ENCODE measurements at regions of chr17 and their contacts with region 1.

Region 1: GRCh38 chr17:47279062-47279736 is 25.6 kb downstream of the ITGB3 start:
- DNase-seq: peak; percentile 76
- H3K4me3 ChIP-seq: no peak overlapping the region
- H3K27ac ChIP-seq: peak overlapping the region; percentile 68
- H3K4me1 ChIP-seq: peaks cover 21% of the 10 kb centered on the region
- H3K27me3 ChIP-seq: no peaks in the 10 kb centered on the region
- CTCF ChIP-seq: no peak
- POLR2A ChIP-seq: no peak

Region 2: DNA sequence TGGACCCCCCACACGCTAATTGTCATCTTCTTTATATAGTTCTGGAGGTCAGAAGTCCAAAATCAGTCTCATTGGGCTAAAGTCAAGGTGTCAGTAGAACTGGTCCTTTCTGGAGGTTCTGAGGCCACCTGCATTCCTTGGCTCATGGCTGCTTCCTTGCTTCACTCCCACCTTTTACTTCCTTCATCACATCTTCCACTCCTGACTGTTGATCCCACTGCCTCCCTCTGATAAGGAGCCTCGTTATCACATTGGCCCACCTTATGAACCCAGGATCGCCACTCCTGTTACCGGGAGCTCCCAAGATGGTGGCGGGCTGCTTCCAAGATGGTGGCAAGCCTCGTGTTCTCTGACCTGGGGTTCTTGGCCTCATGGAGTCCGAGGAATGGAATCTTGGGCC is 173.1 kb before region 1 on chr17:
- CTCF ChIA-PET with region 1: no interaction called
- POLR2A ChIA-PET with region 1: no interaction called
- dilution Hi-C with region 1: no loop called
- intact Hi-C with region 1: no loop called
- DNase-seq: no peak
- H3K4me3 ChIP-seq: no peak overlapping the region
- H3K27ac ChIP-seq: no peak overlapping the region
- H3K4me1 ChIP-seq: no peaks in the 10 kb centered on the region
- H3K27me3 ChIP-seq: no peaks in the 10 kb centered on the region
- CTCF ChIP-seq: no peak
- POLR2A ChIP-seq: no peak

Region 3: DNA sequence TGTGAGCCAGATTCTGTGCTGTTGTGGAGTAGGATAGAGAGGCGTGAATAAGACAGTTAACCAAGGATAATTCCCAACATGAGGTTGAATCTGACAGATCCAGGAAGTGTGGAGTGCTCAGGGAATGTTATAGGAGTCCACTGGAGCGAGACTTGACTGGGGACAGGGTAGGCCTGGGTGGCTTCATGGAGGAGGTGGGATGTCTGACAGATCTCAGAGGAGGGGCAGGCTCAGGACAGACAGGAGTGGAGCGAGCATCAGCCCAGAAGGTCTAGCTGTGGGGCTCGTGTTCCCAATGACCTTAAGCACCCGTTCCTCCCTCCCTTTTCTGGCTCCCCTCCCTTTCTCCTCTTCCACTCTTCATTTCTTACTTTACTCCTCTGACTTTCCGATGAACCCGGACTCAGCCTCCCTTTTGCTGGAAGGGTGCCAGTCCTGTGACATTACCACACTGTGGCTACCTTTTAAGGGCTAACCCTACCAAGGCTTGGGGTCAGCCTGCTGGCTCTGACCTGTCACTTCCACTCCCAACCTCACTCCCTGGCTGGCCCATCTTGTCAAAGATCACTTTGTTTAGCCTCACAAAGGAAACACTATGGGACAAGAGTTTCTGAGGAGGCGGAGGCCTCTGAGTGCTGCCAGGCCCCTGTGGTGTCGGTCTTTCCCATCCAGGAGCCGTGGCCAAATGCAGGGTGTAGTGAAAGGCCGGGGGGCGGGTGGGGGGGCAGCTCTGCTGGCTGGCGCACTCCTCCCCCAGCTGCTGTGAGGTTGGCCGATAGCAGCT is 16.1 kb after region 1 on chr17:
- CTCF ChIA-PET with region 1: interaction called, 3 read pairs
- POLR2A ChIA-PET with region 1: no interaction called
- dilution Hi-C with region 1: no loop called
- intact Hi-C with region 1: loop called (anchors 1 kb)
- DNase-seq: no peak
- H3K4me3 ChIP-seq: no peak overlapping the region
- H3K27ac ChIP-seq: peak overlapping the region; percentile 75
- H3K4me1 ChIP-seq: peaks cover 15% of the 10 kb centered on the region
- H3K27me3 ChIP-seq: no peaks in the 10 kb centered on the region
- CTCF ChIP-seq: no peak
- POLR2A ChIP-seq: no peak